MCF 10A (cell line): ENCODE measurements at regions of chr1 and their contacts with region 1.

Region 1: GRCh38 chr1:38026592-38027200 is 14.2 kb downstream of the UTP11 start:
- DNase-seq: peak; percentile 74
- H3K4me3 Mint-ChIP-seq: peak overlapping the region; percentile 38
- H3K27ac Mint-ChIP-seq: peak overlapping the region; percentile 54
- H3K4me1 Mint-ChIP-seq: peaks cover 41% of the 10 kb centered on the region
- H3K27me3 Mint-ChIP-seq: no peaks in the 10 kb centered on the region
- CTCF ChIP-seq: peak; percentile 64

Region 2: DNA sequence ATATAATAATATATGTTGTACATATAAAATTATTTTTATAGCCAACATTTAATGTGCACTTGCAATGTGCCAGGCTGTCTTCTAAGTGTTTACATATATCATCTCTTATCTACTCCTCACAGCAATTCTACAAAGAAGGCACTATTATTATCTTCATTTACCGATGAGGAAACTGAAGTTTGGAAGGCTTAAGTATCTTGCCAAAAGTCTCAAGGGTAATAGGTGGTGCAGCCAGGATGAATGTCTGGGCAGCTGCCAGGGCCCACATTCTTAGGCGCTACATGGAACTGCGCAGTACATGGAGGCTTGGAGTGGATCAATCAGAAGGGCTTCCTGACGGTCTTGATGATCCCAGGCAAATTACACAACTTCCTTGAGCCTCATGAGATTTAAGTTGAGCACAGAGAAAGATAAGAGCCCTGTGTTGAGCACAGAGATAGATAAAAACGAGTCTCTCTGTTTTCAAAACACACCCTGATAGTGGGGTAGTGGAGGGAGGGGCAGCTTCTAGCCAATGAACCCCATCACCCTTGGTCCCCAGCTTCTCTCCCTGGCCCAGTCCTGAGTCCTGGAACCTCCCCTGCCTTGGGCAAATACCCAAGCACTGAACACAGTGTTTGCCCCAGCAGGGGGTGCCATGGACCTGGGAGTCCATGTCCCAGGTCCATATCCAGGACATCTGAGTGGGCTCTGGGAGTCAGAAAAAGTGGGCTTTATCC is 10.7 kb after region 1 on chr1:
- CTCF ChIA-PET with region 1: interaction called, 12 read pairs
- POLR2A ChIA-PET with region 1: interaction called, 4 read pairs
- intact Hi-C with region 1: no loop called
- DNase-seq: peak; percentile 43
- H3K4me3 Mint-ChIP-seq: no peak overlapping the region
- H3K27ac Mint-ChIP-seq: no peak overlapping the region
- H3K4me1 Mint-ChIP-seq: peaks cover 6% of the 10 kb centered on the region
- H3K27me3 Mint-ChIP-seq: peaks cover 7% of the 10 kb centered on the region
- CTCF ChIP-seq: no peak

Region 3: DNA sequence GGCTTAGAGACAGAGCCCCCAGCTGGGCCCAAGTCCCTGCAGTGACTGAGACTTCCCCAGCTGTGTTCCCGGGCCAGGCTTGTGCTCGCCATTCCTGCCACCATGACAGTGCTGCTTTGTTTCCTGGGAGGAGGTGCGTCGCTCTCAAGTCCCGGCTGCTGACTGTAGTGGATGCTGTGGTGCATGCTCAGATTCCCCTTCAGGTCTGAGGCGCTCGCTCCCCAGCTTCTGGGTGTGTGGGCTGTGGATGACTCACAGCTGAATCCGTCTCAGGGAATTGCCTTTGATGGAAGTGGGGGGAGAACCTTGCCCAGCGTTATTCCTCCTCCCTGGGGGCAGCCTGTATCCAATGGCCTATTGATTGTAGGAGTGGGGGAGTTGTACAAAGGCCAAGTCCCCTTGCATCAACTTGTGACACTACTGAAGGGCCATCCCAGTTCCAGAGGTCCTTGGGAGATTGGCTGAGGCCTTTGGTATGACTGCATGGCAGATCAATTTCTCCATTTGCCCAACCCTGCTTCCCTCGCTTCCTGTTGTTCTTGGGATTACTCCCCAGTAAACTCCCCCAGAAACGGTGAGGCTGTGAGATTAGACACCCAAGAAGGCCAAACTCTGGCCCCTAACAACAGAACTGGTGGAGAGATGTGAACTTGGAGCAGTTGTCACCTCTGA is 37.7 kb after region 1 on chr1:
- CTCF ChIA-PET with region 1: no interaction called
- POLR2A ChIA-PET with region 1: no interaction called
- intact Hi-C with region 1: loop called (anchors 5 kb)
- DNase-seq: peak; percentile 69
- H3K4me3 Mint-ChIP-seq: no peak overlapping the region
- H3K27ac Mint-ChIP-seq: no peak overlapping the region
- H3K4me1 Mint-ChIP-seq: peaks cover 6% of the 10 kb centered on the region
- H3K27me3 Mint-ChIP-seq: no peaks in the 10 kb centered on the region
- CTCF ChIP-seq: no peak

Region 4: GRCh38 chr1:38152351-38153065 is 125.8 kb after region 1 on chr1:
- CTCF ChIA-PET with region 1: interaction called, 22 read pairs
- POLR2A ChIA-PET with region 1: interaction called, 3 read pairs
- intact Hi-C with region 1: loop called (anchors 2 kb)
- DNase-seq: peak; percentile 54
- H3K4me3 Mint-ChIP-seq: no peak overlapping the region
- H3K27ac Mint-ChIP-seq: no peak overlapping the region
- H3K4me1 Mint-ChIP-seq: peaks cover 4% of the 10 kb centered on the region
- H3K27me3 Mint-ChIP-seq: no peaks in the 10 kb centered on the region
- CTCF ChIP-seq: peak; percentile 20

Region 5: GRCh38 chr1:38834937-38835827 is 808.5 kb after region 1 on chr1:
- CTCF ChIA-PET with region 1: interaction called, 29 read pairs
- POLR2A ChIA-PET with region 1: interaction called, 16 read pairs
- intact Hi-C with region 1: loop called (anchors 1 kb)
- DNase-seq: peak; percentile 86
- H3K4me3 Mint-ChIP-seq: no peak overlapping the region
- H3K27ac Mint-ChIP-seq: no peak overlapping the region
- H3K4me1 Mint-ChIP-seq: peaks cover 6% of the 10 kb centered on the region
- H3K27me3 Mint-ChIP-seq: peaks cover 12% of the 10 kb centered on the region
- CTCF ChIP-seq: peak; percentile 70